ENCODE measurements at regions of chr1 and their contacts with region 1.

Region 1: DNA sequence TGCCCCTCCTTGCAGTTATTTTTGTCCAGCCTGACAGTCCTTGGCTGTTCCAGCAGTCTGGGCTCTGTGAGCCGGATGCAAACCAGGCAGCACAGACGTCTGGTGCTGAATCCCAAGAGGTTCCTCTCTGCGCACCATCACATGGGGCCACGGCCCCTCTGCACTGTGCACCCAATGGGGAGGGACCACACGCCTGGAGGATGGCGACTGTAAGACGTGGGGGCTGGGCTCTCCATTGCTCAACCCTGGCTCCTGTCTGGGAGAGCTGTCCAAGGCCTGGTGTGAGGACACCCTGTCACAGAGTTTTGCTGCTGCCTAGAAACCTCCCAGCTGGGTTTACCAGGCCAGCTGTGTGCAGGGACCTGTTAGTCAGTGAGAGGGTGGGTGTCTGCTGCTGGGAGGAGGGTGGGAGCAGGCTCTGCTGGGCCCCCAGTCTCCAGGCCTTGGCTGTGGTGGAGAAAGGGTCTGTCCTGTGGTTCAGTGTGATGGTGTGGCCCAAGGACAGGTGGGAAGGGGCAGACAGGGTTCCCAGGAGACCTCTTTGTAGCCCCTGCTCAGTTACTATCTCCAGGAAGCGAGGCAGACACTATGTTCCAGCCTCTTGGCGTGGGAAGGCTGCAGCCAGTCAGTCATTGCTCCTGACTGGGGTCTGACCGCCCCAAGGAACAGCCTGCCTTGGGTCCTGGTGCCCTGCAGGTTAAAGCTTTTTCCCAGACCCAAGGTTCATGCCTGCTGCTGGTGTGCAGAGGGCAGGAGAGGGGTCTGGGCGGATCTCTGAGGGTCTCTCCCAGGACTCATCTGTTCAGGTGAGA is 13.8 kb downstream of the HEYL start:
- DNase-seq: peak; percentile 93
- ATAC-seq: peak; percentile 93

Region 2: DNA sequence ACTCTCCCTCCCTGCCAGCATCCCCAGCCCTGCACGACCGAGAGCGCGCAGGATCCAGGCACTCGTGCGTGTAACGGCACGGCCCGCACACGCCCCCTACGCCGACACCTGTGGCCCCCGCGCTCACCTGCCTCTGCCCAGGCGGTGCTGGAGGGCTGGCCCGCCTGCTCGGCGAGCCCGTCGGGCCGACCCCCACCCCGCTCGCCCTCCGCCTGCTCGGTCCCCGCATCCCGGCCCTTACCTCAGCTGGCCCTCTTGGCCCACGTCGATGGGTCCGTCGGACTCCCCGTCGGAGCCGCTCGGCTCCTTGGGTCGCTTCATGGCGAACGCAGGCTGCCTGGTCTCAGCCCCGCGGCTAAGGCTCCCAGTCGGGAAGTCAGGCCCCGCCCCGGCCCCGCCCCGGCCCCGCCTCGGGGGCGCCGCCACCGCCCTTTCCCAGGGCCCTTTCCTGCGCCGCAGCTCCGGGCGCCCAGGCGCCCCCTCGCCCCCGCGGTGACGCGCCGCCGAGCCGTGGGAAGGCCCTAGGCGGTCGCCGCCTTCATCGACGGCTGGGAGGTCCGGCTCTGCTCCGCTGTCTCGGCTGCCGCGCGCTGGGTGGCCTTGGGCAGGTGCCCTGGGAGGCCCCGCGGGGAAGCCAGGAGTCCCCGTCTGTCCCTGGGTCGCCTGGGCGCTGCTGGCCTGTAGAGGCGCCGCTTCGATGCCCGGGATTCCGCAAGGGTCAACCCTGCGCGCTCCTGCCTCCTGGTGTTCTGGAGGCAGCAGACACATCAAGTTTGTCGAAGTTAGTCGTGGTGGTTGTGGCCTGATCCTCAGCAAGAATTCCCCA is 13.8 kb after region 1 on chr1 and contains the start of gene HEYL:
- intact Hi-C with region 1: loop called (anchors 2 kb)
- DNase-seq: peak; percentile 88
- ATAC-seq: peak; percentile 89
- total RNA-seq, gene HEYL: 19.8 TPM

Region 3: GRCh38 chr1:39646232-39647081 is 20.8 kb after region 1 on chr1:
- intact Hi-C with region 1: loop called (anchors 1 kb)
- DNase-seq: peak; percentile 93
- ATAC-seq: peak; percentile 90

Region 4: GRCh38 chr1:39691262-39692151 is 65.8 kb after region 1 on chr1 and contains the start of gene HPCAL4:
- intact Hi-C with region 1: no loop called
- DNase-seq: peak; percentile 93
- ATAC-seq: peak; percentile 96
- total RNA-seq, gene HPCAL4: 2.5 TPM

Measured in Right ventricle myocardium inferior (tissue), 1 donor.